ENCODE measurements at regions of chr16 and their contacts with region 1.

Region 1: GRCh38 chr16:20385844-20386832 is 18.4 kb downstream of the PDILT start:
- DNase-seq: peak in 3 of 5 donors; percentile 22 to 30 (median 23)
- H3K4me3 ChIP-seq: no peak overlapping the region
- H3K4me3 Mint-ChIP-seq: no peak overlapping the region
- H3K27ac ChIP-seq: no peak overlapping the region
- H3K27ac Mint-ChIP-seq: no peak overlapping the region
- H3K4me1 ChIP-seq: no peaks in the 10 kb centered on the region
- H3K4me1 Mint-ChIP-seq: no peaks in the 10 kb centered on the region
- H3K27me3 ChIP-seq: no peaks in the 10 kb centered on the region
- H3K27me3 Mint-ChIP-seq: peaks cover 6 to 14% of the 10 kb centered on the region in 2 donors

Region 2: GRCh38 chr16:19907161-19907992 is 478.8 kb before region 1 on chr16:
- CTCF ChIA-PET with region 1: interaction called, 12 read pairs
- POLR2A ChIA-PET with region 1: no interaction called
- DNase-seq: peak; percentile 49 to 71 (median 52)
- H3K4me3 ChIP-seq: peak overlapping the region; percentile 3
- H3K4me3 Mint-ChIP-seq: peak overlapping the region in 6 of 7 donors; percentile 26 to 90 (median 65)
- H3K27ac ChIP-seq: no peak overlapping the region
- H3K27ac Mint-ChIP-seq: peak overlapping the region in 2 of 8 donors; percentile 42 to 74
- H3K4me1 ChIP-seq: no peaks in the 10 kb centered on the region
- H3K4me1 Mint-ChIP-seq: peaks cover 8 to 13% (median 10%) of the 10 kb centered on the region in 3 donors
- H3K27me3 ChIP-seq: no peaks in the 10 kb centered on the region
- H3K27me3 Mint-ChIP-seq: peaks cover 17 to 24% of the 10 kb centered on the region in 2 donors